Cardiac septum (tissue), 1 donor: ENCODE measurements at regions of chr1 and their contacts with region 1.

Region 1: GRCh38 chr1:113677250-113678158 is 81.8 kb downstream of the PHTF1 start:
- DNase-seq: no peak

Region 2: DNA sequence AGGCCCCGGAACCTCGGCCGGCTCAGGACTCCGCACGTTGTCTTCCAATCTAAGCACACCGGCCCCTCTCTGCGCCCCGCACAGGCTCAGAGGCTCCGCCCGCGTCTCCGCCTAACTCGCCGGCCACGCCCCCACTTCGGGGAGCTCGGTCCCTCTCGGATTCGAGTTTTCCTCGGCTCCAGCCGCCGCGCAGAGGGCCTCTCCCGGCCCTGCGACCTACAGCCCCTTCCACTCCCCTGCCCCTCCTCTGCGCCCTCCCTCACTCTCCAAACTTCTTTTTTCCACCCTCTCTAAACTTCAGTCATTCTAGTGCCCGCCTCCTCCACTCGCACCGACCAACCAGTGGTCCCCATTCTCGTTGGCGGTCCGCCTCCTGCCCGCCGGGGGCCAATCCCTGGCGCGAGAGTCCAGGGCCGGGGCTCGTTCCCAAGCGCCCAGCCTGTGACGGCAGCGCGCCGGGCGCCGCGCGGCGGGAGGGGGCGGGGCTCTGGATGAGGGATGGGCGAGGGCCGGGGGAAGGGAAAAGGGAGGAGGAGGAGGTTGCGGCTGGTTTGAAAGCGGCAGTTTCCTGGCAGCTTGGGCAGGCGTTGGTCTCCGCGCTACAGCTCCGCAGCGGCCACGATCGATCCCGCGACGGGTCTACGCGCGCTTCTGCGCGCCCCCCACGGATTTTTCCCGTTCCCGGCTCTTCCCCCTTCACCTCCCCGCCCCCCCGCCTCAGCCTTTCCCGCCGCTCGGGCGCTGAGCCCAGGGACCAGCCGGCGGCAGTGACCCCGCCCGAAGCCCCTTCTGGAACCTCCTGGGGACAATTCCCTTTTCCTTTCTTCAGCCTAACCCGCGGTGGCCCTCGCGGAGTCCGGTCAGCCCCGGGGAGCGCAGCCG is 287.3 kb before region 1 on chr1 and contains the start of gene MAGI3:
- intact Hi-C with region 1: loop called (anchors 5 kb)
- DNase-seq: peak; percentile 97
- total RNA-seq, gene MAGI3: 8.6 TPM

Region 3: GRCh38 chr1:113452921-113453770 is 224.4 kb before region 1 on chr1:
- intact Hi-C with region 1: loop called (anchors 10 kb)
- DNase-seq: no peak

Region 4: DNA sequence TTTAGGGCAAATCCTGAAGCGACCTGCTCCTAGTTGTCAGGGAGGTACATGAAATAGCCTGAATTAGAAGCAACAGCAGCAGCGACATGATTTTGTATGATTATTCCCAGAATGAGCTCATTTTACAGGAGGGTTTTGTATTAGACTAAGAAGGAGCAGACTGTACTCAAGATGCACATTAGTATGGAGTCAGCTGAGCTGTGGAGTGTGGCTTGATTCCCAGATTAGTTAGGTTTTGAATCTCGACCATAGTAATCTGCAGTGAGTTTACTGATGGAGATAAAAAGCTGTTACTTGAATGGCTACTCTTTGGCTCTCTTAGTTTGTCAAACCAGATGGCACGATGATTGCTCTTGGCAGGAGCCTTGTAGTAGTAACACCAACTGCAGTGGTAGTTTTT is 61.3 kb before region 1 on chr1:
- intact Hi-C with region 1: no loop called
- DNase-seq: no peak

Region 5: GRCh38 chr1:113701429-113701828 is 23.9 kb after region 1 on chr1:
- intact Hi-C with region 1: no loop called
- DNase-seq: no peak